Posterior cingulate gyrus (tissue), 11 donors: ENCODE measurements at regions of chr22 and their contacts with region 1.

Region 1: DNA sequence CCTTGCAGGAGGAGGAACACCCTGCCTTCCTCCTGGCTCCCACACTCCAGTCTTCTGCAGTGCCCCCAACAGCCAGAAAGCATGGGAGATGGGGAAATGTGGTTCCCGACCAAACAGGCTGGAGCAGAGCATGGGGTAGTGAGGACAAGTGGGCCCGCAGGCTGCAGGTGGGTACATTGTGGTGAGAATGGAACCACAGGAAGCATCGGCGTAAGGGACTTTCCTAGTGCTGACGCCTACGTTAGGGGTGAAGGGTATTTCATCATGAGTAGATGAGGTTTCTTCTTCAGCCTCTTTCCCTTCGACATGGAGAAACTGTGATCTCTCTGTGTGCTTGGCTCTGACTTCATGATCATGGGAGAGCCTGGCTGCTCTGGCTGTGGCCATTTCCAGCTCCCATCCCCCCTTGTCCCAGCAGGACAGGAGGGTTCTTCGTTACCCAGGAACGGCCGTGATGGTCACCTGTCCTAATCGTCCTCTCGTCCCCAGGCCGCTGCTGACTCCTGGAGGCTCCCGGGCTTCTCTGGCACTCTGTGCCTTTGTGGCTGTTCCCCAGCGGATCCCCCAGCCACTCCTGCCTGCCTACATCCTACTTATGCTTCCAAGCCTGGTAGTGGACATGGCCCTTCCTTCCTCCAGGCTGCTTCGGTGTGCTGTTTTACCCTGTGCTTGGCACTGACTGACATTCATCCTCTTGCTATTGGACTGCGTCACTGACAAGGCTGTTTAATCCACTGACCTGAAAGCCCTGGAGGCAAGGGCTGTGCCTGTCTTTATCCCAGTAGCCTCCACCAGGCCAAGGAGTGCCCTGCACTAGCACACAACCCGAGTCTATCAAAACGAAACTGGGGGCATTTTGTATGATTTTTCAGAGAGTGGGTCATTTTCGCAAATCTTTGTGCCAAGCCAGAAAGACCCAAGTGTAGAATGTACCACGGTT is 65.2 kb upstream of the CECR2 start:
- DNase-seq: peak in 2 of 10 donors; percentile 57 to 75

Region 2: GRCh38 chr22:17284888-17285287 is 19.2 kb before region 1 on chr22:
- intact Hi-C with region 1: loop called (anchors 2 kb)
- DNase-seq: peak in 3 of 10 donors; percentile 2 to 52 (median 18)